Naive thymus-derived CD8-positive, alpha-beta T cell (primary cell): ENCODE measurements at regions of chr1 and their contacts with region 1.

Region 1: GRCh38 chr1:35268282-35269200 is at the start of gene ZMYM4:
- DNase-seq: peak; percentile 69 to 95 (median 86)
- ATAC-seq: peak; percentile 93
- H3K4me3 Mint-ChIP-seq: peak within 1 kb of the TSS; percentile 79 to 99 (median 90)
- H3K27ac Mint-ChIP-seq: peak within 1 kb of the TSS; percentile 43 to 99 (median 91)
- H3K4me1 Mint-ChIP-seq: peaks cover 22 to 43% (median 38%) of the 10 kb centered on the region in 4 donors
- H3K27me3 Mint-ChIP-seq: peaks cover 0 to 8% (median 4%) of the 10 kb centered on the region in 5 donors
- polyA plus RNA-seq, gene ZMYM4: 25.1 to 31.7 (median 28.4) TPM

Region 2: DNA sequence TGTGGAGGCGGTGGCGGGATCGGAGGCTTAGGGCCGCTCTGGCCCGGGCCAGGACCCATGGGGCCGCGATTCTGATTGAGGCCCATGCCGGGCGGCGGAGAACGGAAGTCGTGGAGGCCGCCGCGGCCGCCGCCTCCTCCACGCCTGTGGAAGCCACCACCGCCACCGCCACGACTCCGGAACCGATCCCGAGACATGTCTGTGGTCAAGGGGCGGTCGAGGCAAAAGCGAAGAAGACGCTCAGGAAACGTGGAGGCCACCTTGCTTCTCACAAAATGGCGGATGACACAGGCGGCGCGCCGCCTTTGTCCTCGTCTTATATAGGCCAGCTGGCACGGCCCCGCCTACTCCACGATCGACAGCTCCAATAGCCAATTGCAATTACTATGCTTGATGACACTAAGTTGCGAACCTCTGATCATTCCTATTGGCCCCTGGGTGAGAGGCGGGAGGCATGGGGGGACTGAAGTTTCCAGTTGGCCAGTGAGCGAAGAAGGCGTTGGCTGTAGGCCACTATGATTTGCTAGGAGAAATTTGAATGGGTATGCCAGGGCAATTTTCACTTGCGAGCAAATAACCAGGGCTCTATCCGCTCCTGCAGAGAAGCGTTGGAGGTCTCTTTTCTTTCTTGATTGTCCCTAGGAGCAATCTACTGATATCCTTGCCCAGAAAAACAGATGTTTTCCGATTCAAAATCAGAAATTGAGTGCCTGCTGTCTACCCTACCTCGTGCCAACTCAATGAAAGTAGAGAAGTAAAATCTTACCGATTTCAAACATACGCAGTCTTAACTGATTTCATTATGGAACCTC is 75.5 kb before region 1 on chr1 and contains the start of gene SFPQ:
- POLR2A ChIA-PET with region 1: interaction called, 13 read pairs
- DNase-seq: peak; percentile 81 to 100 (median 97)
- ATAC-seq: peak; percentile 87 to 90
- H3K4me3 Mint-ChIP-seq: peak within 1 kb of the TSS; percentile 89 to 99 (median 96)
- H3K27ac Mint-ChIP-seq: peak within 1 kb of the TSS; percentile 93 to 100 (median 98)
- H3K4me1 Mint-ChIP-seq: peaks cover 18 to 51% (median 47%) of the 10 kb centered on the region in 4 donors
- H3K27me3 Mint-ChIP-seq: no peaks in the 10 kb centered on the region
- polyA plus RNA-seq, gene SFPQ: 85.6 to 138 (median 104) TPM

Region 3: DNA sequence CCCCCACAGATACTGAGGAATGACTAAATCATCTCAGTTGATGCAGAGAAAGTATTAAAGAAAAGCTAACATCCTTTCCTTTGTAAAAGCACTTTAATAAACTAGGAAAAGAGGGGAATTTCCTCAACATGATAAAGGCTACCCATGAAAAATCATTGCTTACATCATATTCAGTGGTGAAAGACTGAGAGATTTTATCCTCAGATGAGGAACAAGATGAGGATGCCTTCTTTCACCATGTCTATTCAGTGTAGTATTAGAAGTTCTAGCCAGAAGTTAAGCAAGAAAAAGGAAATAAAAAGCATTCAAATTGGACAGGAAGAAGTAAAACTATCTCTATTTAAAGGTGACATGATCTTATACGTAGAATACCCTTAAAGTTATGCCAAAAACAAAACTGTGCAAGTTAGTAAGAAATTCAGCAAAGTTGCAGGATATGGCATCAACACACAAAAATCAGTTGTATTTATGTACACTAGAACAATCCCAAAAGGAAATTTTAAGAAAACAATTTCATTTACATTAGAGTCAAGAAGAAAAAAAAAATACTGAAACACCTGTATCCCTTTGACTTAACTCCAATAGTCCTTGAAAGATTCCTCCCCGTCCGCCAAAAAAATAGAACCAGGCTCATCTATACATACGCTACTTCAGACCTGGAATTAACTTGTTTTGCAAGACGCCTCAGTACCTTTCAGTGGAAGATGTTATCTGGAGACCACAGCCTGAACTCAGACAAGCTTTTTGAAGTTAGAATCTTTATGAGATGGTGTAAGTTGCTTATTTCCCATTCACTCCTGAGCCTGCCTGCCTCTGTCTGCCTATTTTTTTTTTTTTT is 17.4 kb after region 1 on chr1:
- POLR2A ChIA-PET with region 1: interaction called, 12 read pairs
- DNase-seq: peak in 5 of 10 donors; percentile 5 to 53 (median 21)
- ATAC-seq: peak; percentile 88 to 93
- H3K4me3 Mint-ChIP-seq: peak overlapping the region; percentile 23 to 74 (median 52)
- H3K27ac Mint-ChIP-seq: peak overlapping the region in 9 of 10 donors; percentile 27 to 89 (median 72)
- H3K4me1 Mint-ChIP-seq: peaks cover 16 to 50% (median 42%) of the 10 kb centered on the region in 4 donors
- H3K27me3 Mint-ChIP-seq: no peaks in the 10 kb centered on the region